ENCODE measurements at regions of chr17 and their contacts with region 1.

Region 1: DNA sequence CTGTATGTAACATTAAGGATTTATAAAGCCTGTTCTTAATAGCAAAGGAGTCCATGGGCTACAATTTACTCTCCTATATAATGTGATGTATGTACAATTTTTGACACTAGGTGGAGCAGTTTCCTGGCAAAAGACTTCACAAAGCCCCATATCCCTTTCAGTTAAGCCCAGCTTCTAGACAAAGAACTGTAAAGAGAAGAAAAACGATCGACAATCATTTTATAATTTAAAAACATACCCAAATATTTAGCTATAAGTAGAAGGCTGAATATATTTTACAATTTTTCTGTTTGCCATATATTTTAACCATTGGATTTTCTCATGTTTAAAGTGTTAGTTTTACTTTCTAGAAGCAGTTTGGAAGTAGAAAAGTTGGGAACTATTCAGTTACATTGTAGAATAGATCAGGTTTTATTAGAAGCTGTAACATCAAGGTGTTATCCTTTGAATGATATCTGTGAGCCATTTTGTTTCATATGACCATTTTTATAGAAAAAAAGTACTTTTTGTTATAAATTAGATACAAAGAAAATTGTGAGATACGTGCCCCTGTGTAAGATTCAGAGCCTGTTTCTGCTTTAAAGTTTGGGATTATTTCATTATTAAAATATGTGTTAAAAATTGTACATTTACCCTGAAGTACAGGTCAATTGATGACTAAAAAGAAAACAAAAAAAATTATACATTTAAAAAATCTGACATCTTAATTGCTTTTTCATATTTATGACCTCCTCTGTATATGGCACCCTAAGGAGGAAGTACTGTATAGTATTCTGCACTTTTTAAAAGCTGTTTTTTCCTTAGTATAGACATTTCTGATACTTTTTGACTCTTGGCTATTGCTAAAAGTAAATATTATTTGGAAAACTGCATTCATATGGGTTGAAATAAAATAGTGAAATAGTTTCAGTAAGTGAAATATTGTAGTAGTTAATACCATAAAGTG is 46.3 kb downstream of the VMP1 start:
- DNase-seq: peak; percentile 85
- ATAC-seq: peak; percentile 97
- H3K4me3 ChIP-seq: no peak overlapping the region
- H3K4me3 Mint-ChIP-seq: peak overlapping the region; percentile 0
- H3K27ac ChIP-seq: no peak overlapping the region
- H3K27ac Mint-ChIP-seq: no peak overlapping the region
- H3K4me1 ChIP-seq: peaks cover 0 to 3% of the 10 kb centered on the region in 2 donors
- H3K4me1 Mint-ChIP-seq: peaks cover 7% of the 10 kb centered on the region
- H3K27me3 ChIP-seq: no peaks in the 10 kb centered on the region
- H3K27me3 Mint-ChIP-seq: no peaks in the 10 kb centered on the region
- CTCF ChIP-seq: peak; percentile 86

Region 2: GRCh38 chr17:59804901-59805465 is 51.2 kb after region 1 on chr17:
- CTCF ChIA-PET with region 1: interaction called, 13 read pairs
- POLR2A ChIA-PET with region 1: interaction called, 5 read pairs
- intact Hi-C with region 1: no loop called
- DNase-seq: no peak
- ATAC-seq: no peak
- H3K4me3 ChIP-seq: peak overlapping the region in 2 of 5 experiments; percentile 4 to 13
- H3K4me3 Mint-ChIP-seq: peak overlapping the region; percentile 43
- H3K27ac ChIP-seq: peak overlapping the region in 1 of 2 donors; percentile 7
- H3K27ac Mint-ChIP-seq: no peak overlapping the region
- H3K4me1 ChIP-seq: peaks cover 2 to 4% of the 10 kb centered on the region in 2 donors
- H3K4me1 Mint-ChIP-seq: peaks cover 4% of the 10 kb centered on the region
- H3K27me3 ChIP-seq: no peaks in the 10 kb centered on the region
- H3K27me3 Mint-ChIP-seq: no peaks in the 10 kb centered on the region
- CTCF ChIP-seq: no peak

Region 3: GRCh38 chr17:59829217-59830006 is 75.6 kb after region 1 on chr17:
- CTCF ChIA-PET with region 1: interaction called, 25 read pairs
- POLR2A ChIA-PET with region 1: interaction called, 3 read pairs
- intact Hi-C with region 1: no loop called
- DNase-seq: peak; percentile 77
- ATAC-seq: peak; percentile 88
- H3K4me3 ChIP-seq: peak overlapping the region in 1 of 5 experiments; percentile 21
- H3K4me3 Mint-ChIP-seq: peak overlapping the region; percentile 72
- H3K27ac ChIP-seq: peak overlapping the region in 1 of 2 donors; percentile 27
- H3K27ac Mint-ChIP-seq: peak overlapping the region; percentile 79
- H3K4me1 ChIP-seq: peaks cover 44 to 59% of the 10 kb centered on the region in 2 donors
- H3K4me1 Mint-ChIP-seq: peaks cover 72% of the 10 kb centered on the region
- H3K27me3 ChIP-seq: no peaks in the 10 kb centered on the region
- H3K27me3 Mint-ChIP-seq: no peaks in the 10 kb centered on the region
- CTCF ChIP-seq: no peak

Region 4: DNA sequence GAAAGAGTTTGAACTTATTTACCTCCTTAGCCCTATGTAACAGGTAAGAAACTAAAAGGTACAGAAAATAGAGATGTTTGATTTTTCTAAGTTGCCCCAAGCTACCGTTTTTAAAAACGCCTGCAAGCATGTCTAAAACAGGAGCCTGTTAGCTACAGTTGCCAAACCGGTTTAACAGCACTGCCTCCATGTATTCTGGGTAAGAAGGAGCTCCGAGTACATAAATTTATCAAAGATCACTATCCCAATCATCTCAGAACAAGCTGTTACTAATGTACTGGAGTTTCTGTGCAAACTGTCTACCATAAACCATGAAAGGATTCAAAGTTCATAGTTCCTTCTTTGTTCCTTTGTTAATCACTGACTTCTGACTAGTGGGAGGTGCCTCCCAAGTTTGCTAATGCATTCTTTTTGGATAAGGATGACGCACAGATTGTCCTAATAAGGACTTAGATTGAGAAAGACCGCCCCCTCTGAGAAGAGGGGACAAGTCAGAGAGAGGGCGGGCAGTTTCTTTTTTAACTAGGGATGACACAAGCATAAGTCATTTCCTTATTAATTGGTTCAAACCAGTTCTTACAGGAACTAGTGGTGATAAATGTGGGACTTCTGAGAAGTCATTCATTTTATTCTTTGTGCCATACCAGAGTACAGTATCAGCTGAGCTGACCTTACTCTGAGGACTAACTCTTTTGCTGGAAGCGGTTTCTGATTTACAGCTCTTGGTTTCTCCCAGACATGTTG is 83.7 kb after region 1 on chr17:
- CTCF ChIA-PET with region 1: interaction called, 230 read pairs
- POLR2A ChIA-PET with region 1: interaction called, 10 read pairs
- intact Hi-C with region 1: loop called (anchors 1 kb)
- DNase-seq: peak; percentile 88
- ATAC-seq: peak; percentile 90
- H3K4me3 ChIP-seq: peak overlapping the region; percentile 31 to 62 (median 50)
- H3K4me3 Mint-ChIP-seq: peak overlapping the region; percentile 92
- H3K27ac ChIP-seq: peak overlapping the region; percentile 85 to 90
- H3K27ac Mint-ChIP-seq: peak overlapping the region; percentile 97
- H3K4me1 ChIP-seq: peaks cover 33 to 45% of the 10 kb centered on the region in 2 donors
- H3K4me1 Mint-ChIP-seq: peaks cover 65% of the 10 kb centered on the region
- H3K27me3 ChIP-seq: no peaks in the 10 kb centered on the region
- H3K27me3 Mint-ChIP-seq: no peaks in the 10 kb centered on the region
- CTCF ChIP-seq: no peak

Region 5: GRCh38 chr17:59859444-59860025 is 105.7 kb after region 1 on chr17:
- CTCF ChIA-PET with region 1: interaction called, 10 read pairs
- POLR2A ChIA-PET with region 1: interaction called, 3 read pairs
- intact Hi-C with region 1: loop called (anchors 1 kb)
- DNase-seq: peak; percentile 54
- ATAC-seq: peak; percentile 53
- H3K4me3 ChIP-seq: no peak overlapping the region
- H3K4me3 Mint-ChIP-seq: no peak overlapping the region
- H3K27ac ChIP-seq: no peak overlapping the region
- H3K27ac Mint-ChIP-seq: peak overlapping the region; percentile 37
- H3K4me1 ChIP-seq: no peaks in the 10 kb centered on the region
- H3K4me1 Mint-ChIP-seq: no peaks in the 10 kb centered on the region
- H3K27me3 ChIP-seq: no peaks in the 10 kb centered on the region
- H3K27me3 Mint-ChIP-seq: no peaks in the 10 kb centered on the region
- CTCF ChIP-seq: peak; percentile 77

Region 6: DNA sequence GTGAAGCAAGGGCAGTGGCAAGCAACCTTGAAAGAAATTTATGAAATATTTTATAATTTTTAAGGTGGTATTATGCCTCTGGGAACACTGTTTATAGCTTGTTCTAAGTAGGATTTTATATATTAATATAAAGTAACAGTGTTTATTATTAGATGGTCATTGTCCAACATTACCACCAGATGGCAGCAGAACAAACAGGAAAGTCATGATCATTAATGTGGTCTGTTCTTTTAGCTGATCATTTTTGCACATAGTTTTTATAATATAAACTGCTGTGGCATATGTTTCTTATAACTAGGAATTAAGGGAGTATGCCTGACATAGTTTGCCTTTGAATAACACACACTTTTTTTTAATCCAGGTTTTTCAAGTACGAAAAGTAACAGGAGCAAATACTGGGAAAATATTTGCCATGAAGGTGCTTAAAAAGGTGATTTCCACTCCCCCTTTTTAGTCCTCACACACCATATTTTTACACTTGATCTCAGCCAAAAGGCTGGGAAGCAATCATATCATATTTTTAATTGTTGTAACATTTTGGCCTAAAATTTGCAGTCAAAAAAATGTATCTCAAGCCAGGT is 160.6 kb after region 1 on chr17:
- CTCF ChIA-PET with region 1: interaction called, 31 read pairs
- POLR2A ChIA-PET with region 1: no interaction called
- intact Hi-C with region 1: no loop called
- DNase-seq: peak; percentile 61
- ATAC-seq: peak; percentile 51
- H3K4me3 ChIP-seq: no peak overlapping the region
- H3K4me3 Mint-ChIP-seq: no peak overlapping the region
- H3K27ac ChIP-seq: no peak overlapping the region
- H3K27ac Mint-ChIP-seq: no peak overlapping the region
- H3K4me1 ChIP-seq: no peaks in the 10 kb centered on the region
- H3K4me1 Mint-ChIP-seq: no peaks in the 10 kb centered on the region
- H3K27me3 ChIP-seq: no peaks in the 10 kb centered on the region
- H3K27me3 Mint-ChIP-seq: no peaks in the 10 kb centered on the region
- CTCF ChIP-seq: peak; percentile 77

Region 7: DNA sequence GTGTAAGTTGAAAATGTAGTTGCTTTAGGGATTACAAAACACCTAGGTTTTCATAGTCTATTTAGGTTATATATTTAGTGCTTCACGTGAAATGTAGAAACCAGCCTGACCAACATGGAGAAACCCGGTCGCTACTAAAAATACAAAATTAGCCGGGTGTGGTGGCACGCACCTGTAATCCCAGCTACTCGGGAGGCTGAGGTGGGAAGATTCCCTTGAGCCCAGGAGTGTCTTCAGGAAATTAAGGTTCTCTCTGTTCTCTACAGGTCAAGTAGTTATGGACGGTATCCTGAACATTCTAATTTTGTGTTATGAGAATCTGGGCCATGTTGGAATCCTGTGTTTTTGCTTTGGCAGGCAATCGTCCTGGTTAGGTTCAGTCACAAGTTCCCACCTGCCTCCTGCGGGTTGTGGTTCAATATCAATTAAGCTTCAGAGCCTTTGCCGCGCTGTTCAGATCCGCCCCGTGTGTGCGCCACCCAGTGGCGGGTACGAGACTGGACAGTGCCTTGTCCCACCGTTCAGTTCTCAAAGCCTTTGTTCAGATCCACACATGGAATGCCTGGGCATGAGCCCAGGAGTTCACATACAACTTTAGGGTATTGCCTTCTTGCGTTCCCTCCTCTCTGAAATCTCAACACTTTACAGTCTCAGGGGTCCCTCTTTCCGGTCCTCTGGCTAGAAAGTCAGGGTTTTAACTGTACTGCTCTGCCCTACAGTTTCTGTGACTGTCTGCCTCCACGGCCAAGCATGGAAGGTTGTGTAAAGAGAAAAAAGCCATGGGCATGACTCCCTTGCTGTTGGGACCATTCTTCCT is 283.2 kb after region 1 on chr17:
- CTCF ChIA-PET with region 1: interaction called, 18 read pairs
- POLR2A ChIA-PET with region 1: interaction called, 5 read pairs
- intact Hi-C with region 1: loop called (anchors 5 kb)
- DNase-seq: peak; percentile 80
- ATAC-seq: peak; percentile 94
- H3K4me3 ChIP-seq: no peak overlapping the region
- H3K4me3 Mint-ChIP-seq: no peak overlapping the region
- H3K27ac ChIP-seq: no peak overlapping the region
- H3K27ac Mint-ChIP-seq: no peak overlapping the region
- H3K4me1 ChIP-seq: peaks cover 3 to 6% of the 10 kb centered on the region in 2 donors
- H3K4me1 Mint-ChIP-seq: peaks cover 5% of the 10 kb centered on the region
- H3K27me3 ChIP-seq: peaks cover 0 to 11% (median 4%) of the 10 kb centered on the region in 4 experiments
- H3K27me3 Mint-ChIP-seq: peaks cover 10% of the 10 kb centered on the region
- CTCF ChIP-seq: peak; percentile 96

Measured in B cell (primary cell).